Caco-2 (cell line): ENCODE measurements at regions of chr19 and their contacts with region 1.

Region 1: DNA sequence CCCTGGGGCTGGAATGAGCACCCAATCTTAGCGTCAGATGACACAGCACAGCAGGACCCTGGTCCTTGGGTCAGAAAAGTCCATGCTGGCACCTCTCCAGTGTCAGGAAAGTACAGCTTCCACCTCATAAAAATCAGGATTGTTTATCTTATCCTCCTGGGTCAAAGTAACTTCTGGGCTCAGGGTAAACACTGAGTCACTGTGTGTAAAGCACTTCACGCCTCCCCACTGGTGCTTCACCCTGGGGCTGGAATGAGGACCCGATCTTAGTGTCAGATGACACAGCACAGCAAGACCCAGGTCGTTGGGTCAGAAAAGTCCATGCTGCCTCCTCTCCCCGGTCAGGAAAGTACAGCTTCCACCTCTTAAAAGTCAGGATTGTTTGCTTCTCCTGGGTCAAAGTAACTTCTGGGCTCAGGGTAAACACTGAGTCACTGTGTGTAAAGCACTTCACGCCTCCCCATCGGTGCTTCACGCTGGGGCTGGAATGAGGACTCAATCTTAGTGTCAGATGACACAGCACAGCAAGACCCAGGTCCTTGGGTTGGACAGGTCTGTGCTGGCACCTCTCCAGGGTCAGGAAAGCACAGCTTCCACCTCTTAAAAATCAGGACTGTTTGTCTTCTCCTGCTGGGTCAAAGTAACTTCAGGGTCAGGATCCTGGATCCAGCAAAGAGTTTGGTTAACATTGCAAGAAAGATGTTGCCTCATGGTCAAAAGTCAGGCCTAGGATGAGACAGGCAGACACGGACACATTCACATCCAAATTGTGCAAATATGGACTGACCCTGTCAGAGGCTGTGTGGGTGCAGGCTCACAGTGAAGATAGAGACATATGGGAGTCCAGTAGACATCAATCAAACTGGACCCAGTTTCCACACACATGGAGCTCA is 39.2 kb upstream of the CYP2A7 start:
- DNase-seq: peak; percentile 90 to 97
- H3K4me3 ChIP-seq: no peak overlapping the region
- H3K4me3 Mint-ChIP-seq: peak overlapping the region; percentile 56
- H3K27ac Mint-ChIP-seq: peak overlapping the region; percentile 96
- H3K4me1 ChIP-seq: peaks cover 48% of the 10 kb centered on the region
- H3K4me1 Mint-ChIP-seq: peaks cover 28% of the 10 kb centered on the region
- H3K27me3 ChIP-seq: no peaks in the 10 kb centered on the region
- H3K27me3 Mint-ChIP-seq: no peaks in the 10 kb centered on the region
- CTCF ChIP-seq: no peak

Region 2: GRCh38 chr19:40806488-40807468 is 114.5 kb before region 1 on chr19:
- CTCF ChIA-PET with region 1: no interaction called
- POLR2A ChIA-PET with region 1: no interaction called
- intact Hi-C with region 1: loop called (anchors 1 kb)
- DNase-seq: peak in 1 of 2 experiments; percentile 76
- H3K4me3 ChIP-seq: no peak overlapping the region
- H3K4me3 Mint-ChIP-seq: no peak overlapping the region
- H3K27ac Mint-ChIP-seq: peak overlapping the region; percentile 87
- H3K4me1 ChIP-seq: peaks cover 13% of the 10 kb centered on the region
- H3K4me1 Mint-ChIP-seq: peaks cover 44% of the 10 kb centered on the region
- H3K27me3 ChIP-seq: no peaks in the 10 kb centered on the region
- H3K27me3 Mint-ChIP-seq: no peaks in the 10 kb centered on the region
- CTCF ChIP-seq: peak; percentile 58 to 66

Region 3: GRCh38 chr19:40822161-40822560 is 99.1 kb before region 1 on chr19:
- CTCF ChIA-PET with region 1: no interaction called
- POLR2A ChIA-PET with region 1: no interaction called
- intact Hi-C with region 1: loop called (anchors 1 kb)
- DNase-seq: peak in 1 of 2 experiments; percentile 26
- H3K4me3 ChIP-seq: no peak overlapping the region
- H3K4me3 Mint-ChIP-seq: peak overlapping the region; percentile 23
- H3K27ac Mint-ChIP-seq: peak overlapping the region; percentile 98
- H3K4me1 ChIP-seq: peaks cover 35% of the 10 kb centered on the region
- H3K4me1 Mint-ChIP-seq: peaks cover 40% of the 10 kb centered on the region
- H3K27me3 ChIP-seq: no peaks in the 10 kb centered on the region
- H3K27me3 Mint-ChIP-seq: no peaks in the 10 kb centered on the region
- CTCF ChIP-seq: no peak

Region 4: GRCh38 chr19:40836754-40837429 is 84.4 kb before region 1 on chr19:
- CTCF ChIA-PET with region 1: no interaction called
- POLR2A ChIA-PET with region 1: no interaction called
- intact Hi-C with region 1: no loop called
- DNase-seq: no peak
- H3K4me3 ChIP-seq: no peak overlapping the region
- H3K4me3 Mint-ChIP-seq: no peak overlapping the region
- H3K27ac Mint-ChIP-seq: no peak overlapping the region
- H3K4me1 ChIP-seq: peaks cover 7% of the 10 kb centered on the region
- H3K4me1 Mint-ChIP-seq: peaks cover 23% of the 10 kb centered on the region
- H3K27me3 ChIP-seq: no peaks in the 10 kb centered on the region
- H3K27me3 Mint-ChIP-seq: no peaks in the 10 kb centered on the region
- CTCF ChIP-seq: no peak

Region 5: DNA sequence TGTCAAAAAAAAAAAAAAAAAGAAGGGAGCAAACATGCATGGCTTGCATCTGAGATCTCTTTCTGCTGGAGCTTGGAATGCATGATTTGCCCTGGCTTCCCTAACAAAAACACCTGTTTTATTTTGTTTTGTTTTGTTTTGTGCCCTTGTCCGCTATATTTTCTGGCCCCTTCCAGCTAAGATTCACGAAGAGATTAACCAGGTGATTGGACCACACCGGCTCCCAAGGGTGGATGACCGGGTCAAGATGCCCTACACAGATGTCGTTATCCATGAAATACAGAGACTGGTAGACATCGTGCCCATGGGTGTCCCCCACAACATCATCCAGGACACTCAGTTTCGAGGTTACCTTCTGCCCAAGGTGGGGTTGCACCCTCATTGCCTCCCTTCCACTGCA is 23.3 kb before region 1 on chr19:
- CTCF ChIA-PET with region 1: no interaction called
- POLR2A ChIA-PET with region 1: interaction called, 8 read pairs
- intact Hi-C with region 1: loop called (anchors 2 kb)
- DNase-seq: no peak
- H3K4me3 ChIP-seq: no peak overlapping the region
- H3K4me3 Mint-ChIP-seq: no peak overlapping the region
- H3K27ac Mint-ChIP-seq: peak overlapping the region; percentile 95
- H3K4me1 ChIP-seq: peaks cover 18% of the 10 kb centered on the region
- H3K4me1 Mint-ChIP-seq: peaks cover 29% of the 10 kb centered on the region
- H3K27me3 ChIP-seq: no peaks in the 10 kb centered on the region
- H3K27me3 Mint-ChIP-seq: no peaks in the 10 kb centered on the region
- CTCF ChIP-seq: no peak

Region 6: DNA sequence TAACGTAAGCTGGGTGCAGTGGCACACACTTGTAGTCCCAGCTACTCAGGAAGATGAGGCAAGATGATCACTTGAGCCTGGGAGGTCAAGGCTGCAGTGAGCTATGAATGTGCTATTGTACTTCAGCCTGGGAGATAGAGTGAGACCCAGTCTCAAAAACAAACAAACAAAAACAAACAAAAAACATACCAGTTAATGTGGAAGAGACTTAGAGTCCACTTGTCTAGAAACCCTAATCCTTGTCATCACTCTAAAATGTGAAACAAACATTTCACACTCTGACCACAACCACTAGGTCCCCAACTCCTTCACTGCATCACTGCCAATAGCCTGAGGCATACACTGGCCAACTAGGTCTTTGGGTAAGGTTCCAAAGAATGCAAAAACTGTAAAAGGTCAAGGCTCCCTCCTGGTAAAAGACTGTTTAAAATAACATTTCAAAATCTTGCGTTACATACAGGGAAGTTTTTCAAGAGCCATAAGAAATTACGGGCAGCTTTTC is 41.3 kb after region 1 on chr19:
- CTCF ChIA-PET with region 1: no interaction called
- POLR2A ChIA-PET with region 1: no interaction called
- intact Hi-C with region 1: no loop called
- DNase-seq: peak in 1 of 2 experiments; percentile 16
- H3K4me3 ChIP-seq: no peak overlapping the region
- H3K4me3 Mint-ChIP-seq: no peak overlapping the region
- H3K27ac Mint-ChIP-seq: no peak overlapping the region
- H3K4me1 ChIP-seq: no peaks in the 10 kb centered on the region
- H3K4me1 Mint-ChIP-seq: no peaks in the 10 kb centered on the region
- H3K27me3 ChIP-seq: no peaks in the 10 kb centered on the region; the same call in 1 of the 2 replicates
- H3K27me3 Mint-ChIP-seq: no peaks in the 10 kb centered on the region
- CTCF ChIP-seq: no peak

Region 7: GRCh38 chr19:41023193-41023592 is 101.9 kb after region 1 on chr19:
- CTCF ChIA-PET with region 1: no interaction called
- POLR2A ChIA-PET with region 1: no interaction called
- intact Hi-C with region 1: loop called (anchors 5 kb)
- DNase-seq: peak in 1 of 2 experiments; percentile 39
- H3K4me3 ChIP-seq: no peak overlapping the region
- H3K4me3 Mint-ChIP-seq: no peak overlapping the region
- H3K27ac Mint-ChIP-seq: no peak overlapping the region
- H3K4me1 ChIP-seq: no peaks in the 10 kb centered on the region
- H3K4me1 Mint-ChIP-seq: no peaks in the 10 kb centered on the region
- H3K27me3 ChIP-seq: no peaks in the 10 kb centered on the region
- H3K27me3 Mint-ChIP-seq: peaks cover 4% of the 10 kb centered on the region
- CTCF ChIP-seq: peak in 1 of 2 experiments; percentile 53